Left colon (tissue), 2 donors: ENCODE measurements at regions of chr19 and their contacts with region 1.

Region 1: DNA sequence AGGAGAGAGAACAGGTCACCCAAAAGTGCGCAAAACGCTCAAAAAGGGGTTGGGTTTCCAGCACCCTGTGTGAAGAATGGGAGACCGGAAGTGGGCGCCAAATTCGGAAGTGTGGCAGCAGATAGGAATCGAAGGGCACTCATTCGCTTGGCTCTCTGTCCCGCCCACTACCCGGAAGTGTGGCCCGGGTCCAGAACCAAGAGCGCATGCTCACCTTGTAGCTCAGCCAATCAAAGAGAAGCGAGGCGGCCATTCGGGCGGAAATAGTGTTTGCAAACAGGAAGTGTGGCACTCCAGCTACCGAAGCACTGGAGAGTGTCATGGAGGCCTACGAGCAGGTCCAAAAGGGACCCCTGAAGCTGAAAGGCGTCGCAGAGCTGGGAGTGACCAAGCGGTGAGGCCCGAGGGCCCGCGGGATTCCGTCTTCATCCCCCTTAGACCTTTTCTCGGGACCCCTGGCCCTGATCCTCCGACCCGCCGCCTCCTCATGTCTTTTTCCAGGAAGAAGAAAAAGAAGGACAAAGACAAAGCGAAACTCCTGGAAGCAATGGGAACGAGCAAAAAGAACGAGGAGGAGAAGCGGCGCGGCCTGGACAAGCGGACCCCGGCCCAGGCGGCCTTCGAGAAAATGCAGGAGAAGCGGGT is at the start of gene FAM32A:
- DNase-seq: peak; percentile 98 to 99
- ATAC-seq: peak; percentile 97
- total RNA-seq, gene FAM32A: 78.8 to 90.5 TPM

Region 2: DNA sequence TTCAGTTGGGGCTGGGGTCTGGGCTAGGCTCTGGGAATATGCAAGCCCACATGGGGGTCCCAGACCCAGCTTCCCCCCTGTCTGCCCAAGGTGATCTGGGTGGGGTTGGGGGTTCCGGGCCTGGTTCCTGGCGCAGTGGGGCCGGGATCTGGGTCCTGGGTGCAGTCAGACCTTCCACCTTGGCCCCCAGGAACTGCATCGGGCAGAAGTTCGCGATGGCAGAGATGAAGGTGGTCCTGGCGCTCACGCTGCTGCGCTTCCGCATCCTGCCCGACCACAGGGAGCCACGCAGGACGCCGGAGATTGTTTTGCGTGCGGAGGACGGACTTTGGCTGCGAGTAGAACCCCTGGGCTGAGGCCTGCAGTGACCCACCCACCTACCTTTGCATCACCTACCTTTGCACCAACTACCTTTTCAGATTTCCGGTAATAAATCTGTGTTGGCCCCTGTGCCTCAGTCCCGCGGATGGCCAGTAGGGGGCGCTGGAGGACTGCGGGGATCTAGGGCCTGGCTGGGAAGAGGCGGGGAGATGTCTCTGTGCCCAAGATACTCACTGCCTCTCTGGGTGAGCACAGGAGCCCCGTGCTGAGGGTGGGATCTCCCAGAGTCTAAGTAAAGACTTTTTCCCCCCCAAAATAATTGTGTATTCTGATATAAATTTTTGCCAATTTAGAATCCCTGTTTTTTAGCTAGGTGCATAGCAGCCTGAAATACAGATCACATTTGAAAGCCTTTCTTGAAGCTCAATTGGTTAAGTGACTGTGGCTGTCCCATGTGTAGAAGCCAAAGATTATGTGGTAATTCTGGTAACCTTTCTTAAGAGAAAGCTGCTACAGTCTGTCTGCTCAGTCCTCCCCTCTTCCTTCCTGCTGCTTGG is 556.0 kb before region 1 on chr19:
- intact Hi-C with region 1: loop called in 1 of 2 experiments (anchors 5 kb)
- DNase-seq: peak; percentile 76 to 94
- ATAC-seq: peak; percentile 99

Region 3: DNA sequence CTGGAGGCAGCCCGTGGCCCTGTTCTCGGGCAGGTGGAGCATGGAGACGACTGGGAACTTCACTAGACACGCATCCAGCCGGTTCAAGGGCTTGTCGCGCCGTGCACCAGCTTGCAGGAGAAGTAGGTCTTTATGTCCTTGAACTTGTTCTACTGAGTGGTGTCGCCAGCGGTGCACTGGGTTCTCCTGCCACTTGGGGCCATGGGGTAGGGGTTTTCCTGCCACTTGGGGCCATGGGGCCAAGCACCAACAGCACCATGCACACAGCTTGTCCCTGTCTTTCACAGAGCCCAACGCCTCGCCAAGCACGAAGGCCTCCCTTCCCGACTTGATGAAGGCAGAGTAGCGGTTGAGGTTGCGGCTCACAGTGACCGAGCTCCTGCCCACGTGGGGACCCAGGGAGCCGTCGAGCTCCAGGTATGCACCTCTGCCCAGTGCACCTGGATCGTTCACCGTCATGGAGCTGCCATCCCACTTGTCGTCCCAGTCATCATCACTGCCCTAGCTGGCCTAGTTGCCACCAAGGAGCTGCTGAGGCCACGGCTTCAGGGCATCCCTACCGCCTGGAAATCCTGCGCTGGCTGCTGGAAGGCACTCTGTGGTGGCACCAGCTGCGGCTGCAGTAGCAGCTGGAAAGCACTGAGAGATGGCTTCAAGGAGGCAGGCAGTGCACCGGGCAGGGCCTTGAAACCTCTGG is 149.5 kb before region 1 on chr19:
- intact Hi-C with region 1: loop called (anchors 5 to 10 kb)
- DNase-seq: peak in 1 of 2 donors; percentile 20
- ATAC-seq: no peak

Region 4: GRCh38 chr19:16041299-16041990 is 143.8 kb before region 1 on chr19:
- intact Hi-C with region 1: loop called (anchors 5 to 10 kb)
- DNase-seq: peak; percentile 65 to 87
- ATAC-seq: peak; percentile 94

Region 5: DNA sequence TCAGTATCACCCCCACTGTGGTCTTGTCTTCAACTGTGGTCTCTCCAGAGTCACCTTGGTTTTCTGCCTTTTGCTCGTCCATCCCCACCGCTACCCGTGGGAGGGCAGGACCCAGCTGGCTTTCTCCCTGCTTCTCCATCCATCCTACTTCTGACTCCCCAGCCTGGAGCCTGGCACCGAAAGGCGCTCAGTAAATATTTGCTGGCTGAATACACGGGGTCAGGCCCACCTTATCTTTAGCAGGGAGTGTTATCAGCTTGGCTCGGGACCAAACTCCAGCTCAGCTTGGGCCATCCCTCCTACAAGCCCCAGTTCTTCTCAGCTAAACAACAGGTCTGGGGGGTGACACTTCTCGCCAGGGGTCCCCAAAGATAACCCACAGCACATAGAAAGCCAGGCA is 77.4 kb after region 1 on chr19:
- intact Hi-C with region 1: no loop called
- DNase-seq: peak; percentile 53 to 65
- ATAC-seq: peak; percentile 89